Activated CD8-positive, alpha-beta T cell treated with anti-CD3 and anti-CD28 coated beads, Interleukin-2, amount 10 ng/mL, durations not matched to agents 7 days and 5 days (primary cell): ENCODE measurements at regions of chr1 and their contacts with region 1.

Region 1: DNA sequence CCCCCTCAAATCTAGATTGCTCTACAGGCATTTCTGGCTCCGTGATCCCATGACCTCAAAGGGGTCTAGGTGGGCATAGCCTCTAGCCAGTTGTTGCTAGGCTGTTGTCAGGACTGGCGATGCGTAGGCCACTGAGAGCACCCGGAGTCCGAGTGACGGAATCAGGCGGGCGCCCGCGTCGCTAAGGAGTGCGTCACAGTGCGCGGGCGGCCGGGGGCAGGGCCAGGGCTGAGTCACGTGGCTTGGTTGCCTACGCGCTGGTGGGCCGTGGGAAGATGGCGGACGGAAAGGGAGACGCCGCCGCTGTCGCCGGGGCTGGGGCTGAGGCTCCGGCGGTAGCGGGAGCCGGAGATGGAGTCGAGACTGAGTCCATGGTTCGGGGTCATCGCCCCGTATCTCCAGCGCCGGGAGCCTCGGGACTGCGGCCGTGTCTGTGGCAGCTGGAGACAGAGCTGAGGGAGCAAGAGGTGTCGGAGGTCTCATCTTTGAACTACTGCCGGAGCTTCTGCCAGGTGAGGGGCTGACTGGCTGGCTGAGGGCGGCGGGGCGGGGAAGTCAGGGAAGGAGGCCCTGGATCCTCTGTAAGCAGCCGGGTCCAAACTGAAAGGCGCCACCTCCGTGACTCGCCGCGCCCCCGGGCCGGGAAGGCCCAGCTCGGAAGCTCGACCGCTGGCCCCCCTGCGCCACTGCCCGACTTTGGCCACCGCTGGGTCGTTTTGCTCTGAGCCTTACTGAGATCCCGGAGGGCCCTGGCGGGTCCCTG is at the start of gene RLF:
- DNase-seq: peak; percentile 96
- ATAC-seq: peak; percentile 96
- H3K4me3 Mint-ChIP-seq: no peak within 1 kb of the TSS
- H3K27ac Mint-ChIP-seq: peak within 1 kb of the TSS; percentile 36
- H3K4me1 Mint-ChIP-seq: peaks cover 15% of the 10 kb centered on the region
- H3K27me3 Mint-ChIP-seq: no peaks in the 10 kb centered on the region
- total RNA-seq, gene RLF: 20.4 to 22.3 TPM

Region 2: DNA sequence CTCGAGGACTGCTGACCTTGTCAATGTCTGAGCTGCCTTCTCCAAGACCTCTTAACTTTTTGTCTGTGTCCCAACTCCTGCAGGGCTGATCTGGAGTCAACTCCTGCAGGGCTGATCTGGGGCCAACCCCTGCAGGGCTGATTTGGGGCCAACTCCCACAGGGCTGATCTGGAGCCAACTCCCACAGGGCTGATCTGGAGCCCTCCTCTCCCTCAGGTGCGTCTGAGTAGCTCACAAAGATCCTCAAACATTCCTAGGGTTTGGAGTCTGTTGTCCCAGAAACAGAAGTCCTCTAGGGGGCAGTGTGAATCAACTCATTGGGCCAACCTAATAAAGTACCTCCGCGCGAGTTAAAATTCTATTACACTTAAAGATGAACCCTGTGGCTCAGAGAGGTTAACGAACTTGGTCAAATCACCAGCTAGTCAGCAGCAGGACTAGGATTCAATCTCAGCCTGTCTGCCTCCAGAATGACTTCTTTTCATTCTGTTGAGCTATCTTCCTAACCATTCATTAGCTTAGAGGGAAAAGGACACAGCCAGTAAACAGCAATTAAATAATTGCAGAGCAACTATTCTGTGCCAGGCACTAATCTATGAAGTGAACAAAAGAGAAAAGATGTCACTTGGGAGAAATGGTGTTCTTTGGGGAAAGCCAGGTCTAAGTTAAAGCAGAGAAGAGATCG is 17.3 kb before region 1 on chr1:
- CTCF ChIA-PET with region 1: interaction called, 12 read pairs
- POLR2A ChIA-PET with region 1: no interaction called
- DNase-seq: peak; percentile 67
- ATAC-seq: peak; percentile 73
- H3K4me3 Mint-ChIP-seq: no peak overlapping the region
- H3K27ac Mint-ChIP-seq: no peak overlapping the region
- H3K4me1 Mint-ChIP-seq: peaks cover 3% of the 10 kb centered on the region
- H3K27me3 Mint-ChIP-seq: peaks cover 45% of the 10 kb centered on the region

Region 3: DNA sequence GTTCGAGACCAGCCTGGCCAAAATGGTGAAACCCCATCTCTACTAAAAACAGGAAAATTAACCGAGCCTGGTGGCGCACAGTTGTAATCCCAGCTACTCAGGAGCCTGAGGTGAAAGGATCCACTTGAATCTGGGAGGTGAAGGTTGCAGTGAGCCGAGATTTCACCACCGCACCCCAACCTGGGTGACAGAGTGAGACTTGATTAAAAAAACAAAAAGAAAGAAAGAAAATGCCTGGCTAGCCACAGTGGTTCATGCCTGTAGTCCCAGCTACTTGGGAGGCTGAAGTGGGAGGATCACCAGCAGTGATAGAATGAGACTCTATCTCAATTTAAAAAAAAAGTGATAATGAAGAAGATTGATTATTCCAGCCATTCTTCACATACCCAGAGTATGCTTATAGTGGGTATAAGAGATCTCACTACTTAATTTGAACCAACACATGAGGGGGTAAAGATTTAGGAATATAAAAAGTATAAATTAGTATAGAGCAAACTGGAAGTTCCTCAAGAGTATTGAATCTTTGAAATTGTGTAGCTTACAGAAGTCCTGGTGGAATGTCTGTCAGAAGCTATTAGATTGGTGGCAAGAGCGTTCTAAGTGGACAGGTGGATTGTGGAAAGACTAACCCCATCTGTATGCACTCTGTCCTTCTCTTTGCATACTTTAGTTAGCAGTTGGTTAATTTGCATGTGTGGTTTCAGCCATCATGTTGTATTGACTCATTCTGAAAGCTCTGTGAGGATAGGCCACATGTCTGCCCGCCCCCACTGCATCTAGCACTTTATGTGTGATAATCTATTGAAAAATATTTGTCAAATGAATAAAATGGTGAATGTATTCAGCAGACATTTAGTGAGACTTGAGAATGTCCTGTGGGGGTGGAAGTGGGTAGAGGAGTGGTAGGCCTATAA is 24.9 kb after region 1 on chr1:
- CTCF ChIA-PET with region 1: interaction called, 10 read pairs
- POLR2A ChIA-PET with region 1: interaction called, 5 read pairs
- DNase-seq: peak; percentile 60
- ATAC-seq: peak; percentile 88
- H3K4me3 Mint-ChIP-seq: no peak overlapping the region
- H3K27ac Mint-ChIP-seq: peak overlapping the region; percentile 19
- H3K4me1 Mint-ChIP-seq: peaks cover 46% of the 10 kb centered on the region
- H3K27me3 Mint-ChIP-seq: no peaks in the 10 kb centered on the region